Panc1 (cell line): ENCODE measurements at regions of chr21 and their contacts with region 1.

Region 1: DNA sequence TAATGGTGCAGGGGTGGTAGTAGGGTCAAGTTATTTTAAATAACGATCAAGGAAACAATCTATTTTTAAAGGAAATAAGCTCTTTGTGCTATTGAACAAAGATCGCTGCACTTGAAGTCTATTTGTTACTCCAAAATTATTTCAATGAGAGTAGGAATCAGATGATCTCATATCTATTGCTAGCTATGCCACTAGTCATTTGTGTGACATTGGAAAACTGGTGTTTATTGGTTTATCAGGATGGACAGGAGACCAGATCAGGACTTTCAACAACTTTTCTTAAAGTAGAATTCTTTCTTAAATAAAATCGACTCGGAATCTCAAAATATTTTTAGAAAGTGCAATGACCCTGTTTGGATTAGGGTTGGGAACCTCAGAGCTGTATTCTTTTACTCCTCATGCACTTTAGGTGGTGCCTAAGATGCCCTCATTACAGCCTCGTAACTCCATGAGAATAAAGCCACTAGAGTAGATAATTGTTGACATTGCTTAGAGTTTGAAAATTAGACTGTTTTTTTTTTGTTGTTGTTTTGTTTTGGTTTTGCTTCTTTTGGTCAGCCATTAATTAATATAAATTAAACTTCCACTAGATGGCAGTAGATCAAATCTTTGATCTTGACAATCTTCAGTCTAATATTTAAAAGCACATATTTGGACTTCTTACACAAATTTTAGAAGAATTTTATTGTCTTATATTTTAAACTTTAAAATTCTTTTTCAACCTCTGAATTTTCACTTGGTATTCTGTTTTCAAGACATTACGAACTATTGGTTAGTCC is 352.4 kb downstream of the USP25 start:
- DNase-seq: no peak
- ATAC-seq: no peak
- H3K4me3 ChIP-seq: no peak overlapping the region
- H3K27ac ChIP-seq: no peak overlapping the region
- H3K4me1 ChIP-seq: no peaks in the 10 kb centered on the region
- H3K27me3 ChIP-seq: no peaks in the 10 kb centered on the region
- CTCF ChIP-seq: peak; percentile 16; the same call in 1 of the 2 replicates

Region 2: GRCh38 chr21:16324630-16325029 is 242.4 kb after region 1 on chr21:
- CTCF ChIA-PET with region 1: no interaction called
- POLR2A ChIA-PET with region 1: no interaction called
- in situ Hi-C with region 1: no loop called
- intact Hi-C with region 1: loop called (anchors 5 kb)
- DNase-seq: no peak
- ATAC-seq: no peak
- H3K4me3 ChIP-seq: no peak overlapping the region
- H3K27ac ChIP-seq: no peak overlapping the region
- H3K4me1 ChIP-seq: no peaks in the 10 kb centered on the region
- H3K27me3 ChIP-seq: no peaks in the 10 kb centered on the region
- CTCF ChIP-seq: no peak